ENCODE measurements at regions of chr2 and their contacts with region 1.

Region 1: GRCh38 chr2:210503001-210503623 is 26.6 kb upstream of the LANCL1 start:
- DNase-seq: no peak
- H3K4me3 ChIP-seq: peak overlapping the region; percentile 23; the same call in 1 of the 2 replicates
- H3K27me3 ChIP-seq: no peaks in the 10 kb centered on the region
- CTCF ChIP-seq: peak; percentile 92

Region 2: DNA sequence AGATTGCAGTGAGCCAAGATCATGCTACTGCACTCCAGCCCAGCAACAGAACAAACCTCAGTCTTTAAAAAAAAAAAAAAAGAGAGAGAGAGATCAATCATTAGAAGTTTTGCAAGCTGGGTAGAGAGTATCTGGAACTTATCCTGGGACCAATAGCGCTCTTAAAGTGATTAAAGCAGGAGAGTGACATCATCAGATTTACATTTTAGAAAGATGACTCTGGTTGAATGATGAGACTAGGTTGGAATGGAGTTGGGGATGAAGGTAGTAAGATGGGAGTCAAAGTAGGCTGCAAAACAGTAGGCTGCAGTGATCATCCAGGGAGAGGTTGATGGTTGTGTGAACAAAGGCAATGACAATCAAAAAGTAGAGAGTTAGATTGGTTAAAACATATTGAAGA is 226.0 kb before region 1 on chr2:
- CTCF ChIA-PET with region 1: no interaction called
- POLR2A ChIA-PET with region 1: no interaction called
- DNase-seq: no peak
- H3K4me3 ChIP-seq: no peak overlapping the region
- H3K27me3 ChIP-seq: no peaks in the 10 kb centered on the region
- CTCF ChIP-seq: no peak

Region 3: DNA sequence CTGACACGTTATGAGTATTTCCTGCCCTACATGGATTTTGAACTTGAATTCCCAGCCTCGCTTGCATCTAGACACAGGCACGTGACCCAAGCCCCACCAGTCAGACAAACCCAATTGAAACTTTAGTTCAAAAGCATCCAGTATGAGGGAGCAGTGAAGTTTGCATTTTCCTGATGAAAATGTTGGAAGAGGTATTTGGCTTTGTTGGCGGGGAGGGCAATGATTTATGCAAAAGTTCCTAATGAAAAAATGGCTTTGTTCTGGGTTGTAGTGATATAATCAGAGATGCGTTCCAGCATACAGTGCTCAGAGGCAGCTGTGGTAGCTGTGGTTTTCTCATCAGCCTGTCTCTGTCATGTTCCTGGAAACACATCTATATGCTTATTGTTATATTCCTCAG is 16.5 kb after region 1 on chr2:
- CTCF ChIA-PET with region 1: interaction called, 21 read pairs
- POLR2A ChIA-PET with region 1: no interaction called
- DNase-seq: no peak
- H3K4me3 ChIP-seq: no peak overlapping the region
- H3K27me3 ChIP-seq: no peaks in the 10 kb centered on the region
- CTCF ChIP-seq: no peak

Region 4: DNA sequence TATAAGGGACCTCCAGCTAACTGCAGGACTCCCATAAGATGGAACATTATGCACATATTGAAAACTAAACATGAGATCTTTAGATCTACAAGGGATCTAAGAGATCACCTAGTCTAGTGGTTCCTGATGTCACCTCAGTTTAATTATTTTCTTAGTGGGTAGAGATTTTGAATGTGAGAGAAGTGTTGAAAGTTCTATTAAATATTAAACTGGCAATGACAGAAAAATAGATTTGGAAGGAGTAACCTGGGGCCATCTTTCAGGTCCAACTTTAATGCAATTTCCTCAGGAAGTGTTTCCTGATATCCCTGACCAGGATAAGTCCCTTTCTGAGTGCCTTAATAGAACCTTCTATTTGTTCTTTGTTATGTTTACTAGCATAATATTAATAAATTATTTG is 24.2 kb after region 1 on chr2:
- CTCF ChIA-PET with region 1: interaction called, 13 read pairs
- POLR2A ChIA-PET with region 1: no interaction called
- DNase-seq: no peak
- H3K4me3 ChIP-seq: no peak overlapping the region
- H3K27me3 ChIP-seq: no peaks in the 10 kb centered on the region
- CTCF ChIP-seq: no peak

Measured in BJ (cell line).